PC-9 (cell line): ENCODE measurements at regions of chr14 and their contacts with region 1.

Region 1: GRCh38 chr14:59507063-59507780 is 22.9 kb downstream of the JKAMP start:
- DNase-seq: peak; percentile 35 to 39
- H3K4me3 ChIP-seq: no peak overlapping the region
- H3K27ac ChIP-seq: no peak overlapping the region
- H3K4me1 ChIP-seq: no peaks in the 10 kb centered on the region
- H3K27me3 ChIP-seq: no peaks in the 10 kb centered on the region
- CTCF ChIP-seq: peak; percentile 66

Region 2: DNA sequence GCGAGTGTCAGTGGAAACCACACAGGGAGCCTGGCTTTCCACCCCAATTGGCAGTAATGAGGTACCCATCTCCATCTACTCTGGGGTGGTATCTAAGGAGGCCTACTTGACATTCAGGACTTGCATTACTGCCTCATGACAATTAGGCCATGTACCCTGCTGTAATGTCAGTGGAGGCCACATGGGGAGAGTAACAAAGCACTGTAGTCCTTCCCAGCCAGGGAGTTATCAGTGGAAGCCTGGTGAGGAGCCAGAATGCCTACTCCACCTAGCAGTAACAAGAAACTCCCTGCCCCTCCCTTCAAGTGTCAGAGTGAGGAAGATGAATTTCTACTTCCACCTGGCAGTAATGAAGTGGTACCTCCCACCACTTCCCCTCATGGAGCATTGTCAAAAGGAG is 1092.4 kb before region 1 on chr14:
- CTCF ChIA-PET with region 1: no interaction called
- POLR2A ChIA-PET with region 1: interaction called, 11 read pairs
- intact Hi-C with region 1: no loop called
- DNase-seq: no peak
- H3K4me3 ChIP-seq: no peak overlapping the region
- H3K27ac ChIP-seq: no peak overlapping the region
- H3K4me1 ChIP-seq: no peaks in the 10 kb centered on the region
- H3K27me3 ChIP-seq: no peaks in the 10 kb centered on the region
- CTCF ChIP-seq: no peak